H1 (cell line): ENCODE measurements at regions of chr4 and their contacts with region 1.

Region 1: GRCh38 chr4:154349829-154350228 is 141.8 kb downstream of the DCHS2 start:
- DNase-seq: no peak
- H3K4me3 ChIP-seq: no peak overlapping the region
- H3K27ac ChIP-seq: no peak overlapping the region
- H3K4me1 ChIP-seq: no peaks in the 10 kb centered on the region
- H3K27me3 ChIP-seq: no peaks in the 10 kb centered on the region
- CTCF ChIP-seq: peak in 2 of 3 experiments; percentile 49 to 51; a peak in 3 of 4 replicates
- EP300 ChIP-seq: no peak
- POLR2A ChIP-seq: no peak
- RAD21 ChIP-seq: peak; percentile 35 to 53

Region 2: GRCh38 chr4:154184238-154184637 is 165.6 kb before region 1 on chr4:
- CTCF ChIA-PET with region 1: no interaction called
- POLR2A ChIA-PET with region 1: no interaction called
- DNase-seq: no peak
- H3K4me3 ChIP-seq: no peak overlapping the region
- H3K27ac ChIP-seq: no peak overlapping the region
- H3K4me1 ChIP-seq: peaks cover 0 to 6% (median 4%) of the 10 kb centered on the region in 4 experiments; a peak in 6 of 7 replicates
- H3K27me3 ChIP-seq: no peaks in the 10 kb centered on the region
- CTCF ChIP-seq: no peak
- EP300 ChIP-seq: no peak
- POLR2A ChIP-seq: no peak
- RAD21 ChIP-seq: no peak

Region 3: GRCh38 chr4:154332681-154333421 is 17.0 kb before region 1 on chr4:
- CTCF ChIA-PET with region 1: interaction called, 18 read pairs
- POLR2A ChIA-PET with region 1: no interaction called
- DNase-seq: peak; percentile 53 to 57
- H3K4me3 ChIP-seq: peak overlapping the region; percentile 17 to 51 (median 42); a peak in 7 of 8 replicates
- H3K27ac ChIP-seq: no peak overlapping the region
- H3K4me1 ChIP-seq: no peaks in the 10 kb centered on the region; a peak in 2 of 7 replicates
- H3K27me3 ChIP-seq: peaks cover 0 to 4% (median 3%) of the 10 kb centered on the region in 4 experiments; a peak in 2 of 7 replicates
- CTCF ChIP-seq: peak; percentile 16 to 34 (median 23); a peak in 2 of 4 replicates
- EP300 ChIP-seq: no peak
- POLR2A ChIP-seq: no peak
- RAD21 ChIP-seq: peak; percentile 29 to 30; a peak in 2 of 4 replicates

Region 4: DNA sequence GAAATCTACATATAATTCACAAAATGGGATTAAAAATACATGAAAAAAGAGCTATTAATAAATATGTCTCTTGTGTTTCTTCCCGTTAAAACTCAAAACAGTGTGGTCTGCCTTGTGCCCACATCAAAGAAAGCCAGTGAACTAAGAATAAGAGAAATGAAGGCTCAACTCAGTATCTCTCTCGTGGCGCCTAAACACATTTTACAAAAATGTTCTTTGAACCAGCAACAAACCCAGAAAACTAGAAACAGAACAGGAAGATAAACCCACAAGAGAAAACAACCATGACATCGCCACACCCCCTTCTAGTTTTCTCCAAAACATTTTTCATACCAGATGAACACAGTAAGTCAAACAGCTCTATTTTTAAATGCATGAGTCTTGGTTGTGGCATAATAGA is 11.6 kb after region 1 on chr4:
- CTCF ChIA-PET with region 1: interaction called, 23 read pairs
- POLR2A ChIA-PET with region 1: no interaction called
- DNase-seq: no peak
- H3K4me3 ChIP-seq: no peak overlapping the region
- H3K27ac ChIP-seq: no peak overlapping the region
- H3K4me1 ChIP-seq: no peaks in the 10 kb centered on the region
- H3K27me3 ChIP-seq: no peaks in the 10 kb centered on the region
- CTCF ChIP-seq: no peak
- EP300 ChIP-seq: no peak
- POLR2A ChIP-seq: no peak
- RAD21 ChIP-seq: no peak

Region 5: GRCh38 chr4:154389148-154389547 is 39.3 kb after region 1 on chr4:
- CTCF ChIA-PET with region 1: no interaction called
- POLR2A ChIA-PET with region 1: no interaction called
- DNase-seq: no peak
- H3K4me3 ChIP-seq: no peak overlapping the region
- H3K27ac ChIP-seq: no peak overlapping the region
- H3K4me1 ChIP-seq: no peaks in the 10 kb centered on the region; a peak in 1 of 7 replicates
- H3K27me3 ChIP-seq: no peaks in the 10 kb centered on the region
- CTCF ChIP-seq: no peak
- EP300 ChIP-seq: no peak
- POLR2A ChIP-seq: no peak
- RAD21 ChIP-seq: no peak